Heart right ventricle (tissue), 16 donors: ENCODE measurements at regions of chr10 and their contacts with region 1.

Region 1: GRCh38 chr10:86648706-86649427 is 5.5 kb upstream of the OPN4 start:
- DNase-seq: peak in 1 of 2 donors; percentile 70
- ATAC-seq: peak; percentile 40 to 75 (median 60)
- H3K4me3 ChIP-seq: no peak overlapping the region
- H3K27ac ChIP-seq: peak overlapping the region in 3 of 10 donors; percentile 11 to 58 (median 48)
- H3K4me1 ChIP-seq: peaks cover 5 to 58% (median 30%) of the 10 kb centered on the region in 9 donors
- H3K27me3 ChIP-seq: no peaks in the 10 kb centered on the region
- CTCF ChIP-seq: no peak

Region 2: DNA sequence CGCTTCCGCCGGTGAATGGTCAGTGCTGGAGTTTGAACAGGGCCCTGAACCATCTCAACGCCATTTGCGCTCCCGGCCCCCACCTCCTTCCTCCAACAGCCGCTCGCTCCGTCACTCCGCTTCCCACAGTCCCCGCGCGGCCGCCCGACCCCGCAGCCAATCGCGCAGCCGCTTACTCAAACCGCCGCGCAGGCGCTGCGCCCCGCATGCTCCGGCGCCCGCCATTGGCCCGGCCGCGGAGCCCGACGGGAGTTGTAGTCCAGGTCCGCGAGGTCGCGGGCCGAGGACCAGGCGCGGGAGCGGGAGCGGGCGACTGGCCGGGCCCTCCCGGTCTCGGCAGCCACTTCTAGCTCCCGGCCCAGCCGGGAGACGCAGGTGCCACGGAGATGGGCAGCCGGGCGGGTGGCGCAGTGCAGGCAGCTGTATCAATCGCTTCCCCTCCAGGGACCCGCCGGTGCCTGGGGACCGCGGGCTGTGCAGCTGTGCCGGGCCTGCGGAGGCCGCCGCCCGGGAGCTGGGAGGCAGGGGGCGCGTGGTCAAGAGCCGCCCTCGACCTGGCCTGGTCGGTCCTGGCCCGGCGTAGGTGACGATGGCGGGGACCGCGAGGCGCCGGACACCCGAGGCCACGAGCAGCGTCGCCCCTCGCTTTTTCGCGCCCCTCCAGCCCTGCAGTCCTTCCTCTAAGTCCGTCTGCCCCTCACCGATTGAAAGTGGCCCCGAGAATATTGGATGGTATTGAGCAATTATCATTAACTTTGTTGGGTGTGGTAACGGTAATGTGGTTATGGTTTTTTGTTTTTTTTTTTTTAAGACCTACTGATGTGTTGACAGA is 127.0 kb before region 1 on chr10 and contains the start of gene WAPL:
- intact Hi-C with region 1: loop called in 1 of 10 experiments (anchors 10 kb)
- DNase-seq: peak; percentile 95 to 96
- ATAC-seq: peak; percentile 98 to 99 (median 98)
- H3K4me3 ChIP-seq: peak within 1 kb of the TSS; percentile 59 to 100 (median 96)
- H3K27ac ChIP-seq: peak within 1 kb of the TSS; percentile 86 to 99 (median 96)
- H3K4me1 ChIP-seq: peaks cover 7 to 65% (median 50%) of the 10 kb centered on the region in 9 donors
- H3K27me3 ChIP-seq: no peaks in the 10 kb centered on the region
- CTCF ChIP-seq: peak in 2 of 9 donors; percentile 12 to 28
- total RNA-seq, gene WAPL: 18.5 to 29.5 (median 25.1) TPM

Region 3: GRCh38 chr10:86688398-86688921 is 39.6 kb after region 1 on chr10:
- intact Hi-C with region 1: loop called in 1 of 10 experiments (anchors 5 kb)
- DNase-seq: peak in 1 of 2 donors; percentile 62
- ATAC-seq: peak in 2 of 8 donors; percentile 11 to 14
- H3K4me3 ChIP-seq: no peak overlapping the region
- H3K27ac ChIP-seq: peak overlapping the region in 7 of 10 donors; percentile 28 to 100 (median 49)
- H3K4me1 ChIP-seq: peaks cover 13 to 100% (median 40%) of the 10 kb centered on the region in 9 donors
- H3K27me3 ChIP-seq: peaks cover 0 to 17% (median 6%) of the 10 kb centered on the region in 7 donors
- CTCF ChIP-seq: peak; percentile 54 to 87 (median 82)